Activated CD4-positive, alpha-beta T cell treated with anti-CD3 and anti-CD28 coated beads, Interleukin-2, amount 10 ng/mL, durations not matched to agents 24 days and 14 days (primary cell): ENCODE measurements at regions of chr2 and their contacts with region 1.

Region 1: GRCh38 chr2:131105156-131105949 is at the start of gene PLEKHB2:
- DNase-seq: peak; percentile 99
- H3K4me3 Mint-ChIP-seq: peak within 1 kb of the TSS; percentile 92
- H3K27ac Mint-ChIP-seq: peak within 1 kb of the TSS; percentile 95
- H3K4me1 Mint-ChIP-seq: peaks cover 44% of the 10 kb centered on the region
- H3K27me3 Mint-ChIP-seq: no peaks in the 10 kb centered on the region
- total RNA-seq, gene PLEKHB2: 62.4 and 66.7 TPM in 2 replicates

Region 2: DNA sequence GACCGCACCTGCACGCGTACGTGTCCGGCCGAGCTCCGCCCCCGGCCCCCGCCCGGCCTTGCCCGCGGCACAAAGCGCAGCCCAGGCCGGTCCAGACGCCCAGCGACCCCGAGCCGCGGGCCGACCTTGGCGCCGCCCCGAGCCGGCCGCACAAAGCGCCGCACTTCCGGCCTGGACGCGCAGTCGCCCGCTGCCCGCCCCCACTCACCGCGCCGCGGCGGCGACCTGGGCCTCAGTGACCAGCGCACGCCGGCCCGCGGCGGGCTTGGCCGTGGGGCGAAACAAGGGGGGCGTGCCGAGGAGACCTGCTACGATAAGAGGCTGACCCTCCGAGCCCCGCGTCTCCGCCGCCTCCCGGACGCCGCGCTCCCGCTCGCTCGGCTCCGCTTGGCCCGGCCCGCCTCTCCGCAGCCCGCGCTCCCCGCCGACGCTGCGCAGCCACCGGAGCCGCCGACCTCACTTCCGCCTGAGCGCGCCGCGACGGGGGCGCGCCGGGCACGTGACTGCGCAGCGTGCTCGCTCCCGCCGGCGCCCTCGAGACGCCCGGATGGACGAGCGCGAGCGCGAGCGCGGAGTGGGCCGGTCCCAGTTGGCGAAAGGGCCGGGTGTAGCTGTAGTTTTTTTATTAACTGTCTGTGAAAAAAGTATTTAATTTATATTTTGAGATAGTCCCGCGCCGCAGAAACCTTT is 12.2 kb before region 1 on chr2 and contains the start of gene FAM168B:
- intact Hi-C with region 1: loop called (anchors 1 kb)
- DNase-seq: peak; percentile 97
- H3K4me3 Mint-ChIP-seq: peak within 1 kb of the TSS; percentile 95
- H3K27ac Mint-ChIP-seq: peak within 1 kb of the TSS; percentile 97
- H3K4me1 Mint-ChIP-seq: peaks cover 13% of the 10 kb centered on the region
- H3K27me3 Mint-ChIP-seq: peaks cover 7% of the 10 kb centered on the region
- total RNA-seq, gene FAM168B: 82.3 and 85.6 TPM in 2 replicates